ENCODE measurements at regions of chr21 and their contacts with region 1.

Region 1: GRCh38 chr21:29298348-29299045 is at the start of gene BACH1:
- DNase-seq: peak; percentile 59 to 91 (median 76)
- ATAC-seq: peak; percentile 80
- H3K4me3 ChIP-seq: peak within 1 kb of the TSS; percentile 71
- H3K4me3 Mint-ChIP-seq: peak within 1 kb of the TSS; percentile 84 to 94 (median 90)
- H3K27ac ChIP-seq: peak within 1 kb of the TSS; percentile 86
- H3K27ac Mint-ChIP-seq: peak within 1 kb of the TSS; percentile 71 to 91 (median 78)
- H3K4me1 ChIP-seq: peaks cover 4 to 47% of the 10 kb centered on the region in 2 donors
- H3K4me1 Mint-ChIP-seq: peaks cover 42 to 85% (median 74%) of the 10 kb centered on the region in 7 donors
- H3K27me3 ChIP-seq: no peaks in the 10 kb centered on the region
- H3K27me3 Mint-ChIP-seq: peaks cover 0 to 3% (median 0%) of the 10 kb centered on the region in 5 donors
- total RNA-seq, gene BACH1: 26.0 to 95.6 (median 45.5) TPM

Region 2: GRCh38 chr21:29002442-29003144 is 295.9 kb before region 1 on chr21:
- CTCF ChIA-PET with region 1: no interaction called
- POLR2A ChIA-PET with region 1: interaction called, 3 read pairs
- intact Hi-C with region 1: loop called (anchors 1 to 10 kb)
- DNase-seq: peak; percentile 90 to 96 (median 94)
- ATAC-seq: peak; percentile 100
- H3K4me3 ChIP-seq: peak overlapping the region; percentile 86
- H3K4me3 Mint-ChIP-seq: peak overlapping the region; percentile 85 to 95 (median 93)
- H3K27ac ChIP-seq: peak overlapping the region; percentile 92
- H3K27ac Mint-ChIP-seq: peak overlapping the region; percentile 97 to 99 (median 99)
- H3K4me1 ChIP-seq: peaks cover 0 to 3% of the 10 kb centered on the region in 2 donors
- H3K4me1 Mint-ChIP-seq: peaks cover 0 to 22% (median 10%) of the 10 kb centered on the region in 7 donors
- H3K27me3 ChIP-seq: no peaks in the 10 kb centered on the region
- H3K27me3 Mint-ChIP-seq: no peaks in the 10 kb centered on the region

Region 3: DNA sequence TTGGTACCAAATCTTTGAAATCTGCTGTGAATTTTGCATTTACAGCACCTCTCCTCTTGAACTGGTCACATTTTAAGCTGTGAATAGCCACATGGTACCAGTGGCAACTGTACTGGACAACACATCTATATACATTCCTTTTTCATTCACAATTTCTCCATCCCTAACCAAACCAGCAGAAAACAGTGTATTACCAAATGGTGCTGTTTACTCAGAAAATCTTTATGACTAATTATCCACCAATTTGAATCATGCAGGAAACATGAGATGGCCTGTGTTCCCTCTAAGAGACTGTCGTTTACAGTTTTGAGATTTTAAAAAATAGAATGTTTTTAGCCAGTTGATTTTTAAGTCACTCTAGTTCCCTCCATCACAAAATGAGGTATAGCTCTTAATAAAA is 207.5 kb before region 1 on chr21:
- CTCF ChIA-PET with region 1: interaction called, 3 read pairs
- POLR2A ChIA-PET with region 1: no interaction called
- intact Hi-C with region 1: loop called (anchors 1 to 2 kb)
- DNase-seq: no peak
- ATAC-seq: peak; percentile 9
- H3K4me3 ChIP-seq: no peak overlapping the region
- H3K4me3 Mint-ChIP-seq: no peak overlapping the region
- H3K27ac ChIP-seq: no peak overlapping the region
- H3K27ac Mint-ChIP-seq: no peak overlapping the region
- H3K4me1 ChIP-seq: no peaks in the 10 kb centered on the region
- H3K4me1 Mint-ChIP-seq: peaks cover 0 to 9% (median 0%) of the 10 kb centered on the region in 7 donors
- H3K27me3 ChIP-seq: no peaks in the 10 kb centered on the region
- H3K27me3 Mint-ChIP-seq: peaks cover 0 to 3% (median 0%) of the 10 kb centered on the region in 5 donors

Region 4: DNA sequence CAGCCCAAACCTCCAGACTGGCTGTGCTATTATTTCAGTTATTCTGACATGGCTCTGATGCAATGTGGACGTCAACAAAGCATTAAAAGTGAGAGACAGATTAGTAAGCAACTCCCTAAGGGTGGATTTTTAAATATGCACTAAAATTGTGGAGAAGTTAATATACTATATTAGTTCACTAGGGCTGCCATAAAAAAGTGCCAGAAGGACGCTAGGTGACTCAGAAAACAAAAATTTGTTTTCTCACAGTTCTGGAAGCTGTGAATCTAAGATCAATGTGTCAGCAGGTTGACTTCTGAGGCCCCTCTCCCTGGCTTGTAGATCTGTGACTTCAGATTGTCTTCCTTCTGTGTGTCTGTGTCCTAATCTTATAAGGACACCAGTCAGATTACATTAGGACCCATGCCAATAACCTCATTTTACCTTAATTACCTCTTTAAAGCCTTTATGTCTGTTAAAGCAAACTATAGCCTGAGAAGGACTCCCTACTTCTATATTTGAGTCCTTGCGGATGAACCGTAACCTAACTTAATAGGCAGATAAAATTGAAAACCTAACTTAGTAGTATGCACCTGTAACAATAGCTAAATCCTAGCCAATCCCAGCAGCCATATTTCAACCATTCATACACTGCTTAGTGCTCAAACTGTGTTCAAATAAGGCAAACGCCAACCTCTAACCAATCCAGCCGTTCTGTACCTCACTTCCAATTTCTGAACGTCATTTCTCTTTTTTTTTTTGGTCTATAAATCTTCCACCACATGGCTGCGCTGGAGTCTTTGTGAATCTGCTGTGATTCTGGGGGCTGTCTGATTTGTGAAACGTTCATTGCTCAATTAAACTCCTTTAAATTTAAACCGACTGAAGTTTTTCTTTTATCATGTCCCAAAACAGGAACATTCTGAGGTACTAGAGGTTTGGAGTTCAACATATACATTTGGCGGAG is 65.6 kb before region 1 on chr21:
- CTCF ChIA-PET with region 1: no interaction called
- POLR2A ChIA-PET with region 1: no interaction called
- intact Hi-C with region 1: loop called (anchors 2 to 5 kb)
- DNase-seq: peak in 2 of 9 donors; percentile 3 to 8
- ATAC-seq: peak; percentile 24
- H3K4me3 ChIP-seq: no peak overlapping the region
- H3K4me3 Mint-ChIP-seq: peak overlapping the region in 1 of 10 donors; percentile 40
- H3K27ac ChIP-seq: no peak overlapping the region
- H3K27ac Mint-ChIP-seq: peak overlapping the region in 1 of 9 donors; percentile 45
- H3K4me1 ChIP-seq: no peaks in the 10 kb centered on the region
- H3K4me1 Mint-ChIP-seq: peaks cover 5 to 40% (median 6%) of the 10 kb centered on the region in 7 donors
- H3K27me3 ChIP-seq: no peaks in the 10 kb centered on the region
- H3K27me3 Mint-ChIP-seq: peaks cover 0 to 14% (median 0%) of the 10 kb centered on the region in 5 donors

Region 5: DNA sequence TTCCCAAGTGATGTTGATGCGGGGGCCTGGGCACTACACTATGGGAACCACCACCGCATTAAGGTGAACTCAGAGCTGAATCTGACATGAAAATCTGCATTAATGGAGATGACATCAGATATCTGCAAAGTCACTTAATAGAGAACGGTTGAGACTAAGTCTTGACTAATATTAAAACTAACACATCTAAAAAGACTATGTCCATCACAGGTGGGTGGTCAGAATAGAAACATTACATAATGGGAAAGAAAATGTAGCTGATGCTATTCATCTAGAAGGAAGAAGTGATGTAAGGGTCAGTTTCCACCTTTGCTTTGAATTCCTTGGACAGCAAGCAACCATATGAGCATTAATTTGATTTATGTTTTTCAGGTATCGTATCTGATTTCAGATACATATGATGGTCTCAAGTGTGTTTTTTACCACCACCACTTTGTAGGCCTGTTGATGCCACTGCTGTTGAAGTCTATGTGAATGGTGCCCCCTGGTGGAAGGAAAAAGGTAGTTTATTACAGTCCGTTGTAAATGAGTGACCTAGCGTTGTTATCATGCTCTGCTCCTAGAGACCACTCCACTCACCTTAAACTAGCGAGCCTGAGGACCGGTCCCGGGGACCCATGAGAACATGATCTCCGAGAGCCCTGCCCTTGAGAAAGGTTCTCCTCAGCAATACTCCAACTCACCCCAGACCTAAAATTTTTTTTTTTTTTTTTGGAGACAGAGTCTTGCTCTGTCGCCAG is 73.7 kb after region 1 on chr21:
- CTCF ChIA-PET with region 1: interaction called, 4 read pairs
- POLR2A ChIA-PET with region 1: no interaction called
- intact Hi-C with region 1: loop called (anchors 1 to 2 kb)
- DNase-seq: peak in 8 of 9 donors; percentile 41 to 70 (median 61)
- ATAC-seq: peak; percentile 94
- H3K4me3 ChIP-seq: no peak overlapping the region
- H3K4me3 Mint-ChIP-seq: no peak overlapping the region
- H3K27ac ChIP-seq: no peak overlapping the region
- H3K27ac Mint-ChIP-seq: peak overlapping the region in 3 of 9 donors; percentile 9 to 60 (median 30)
- H3K4me1 ChIP-seq: peaks cover 9 to 10% of the 10 kb centered on the region in 2 donors
- H3K4me1 Mint-ChIP-seq: peaks cover 5 to 15% (median 10%) of the 10 kb centered on the region in 7 donors
- H3K27me3 ChIP-seq: no peaks in the 10 kb centered on the region
- H3K27me3 Mint-ChIP-seq: no peaks in the 10 kb centered on the region

Measured in naive thymus-derived CD4-positive, alpha-beta T cell (primary cell).